ENCODE measurements at regions of chr7 and their contacts with region 1.

Region 1: DNA sequence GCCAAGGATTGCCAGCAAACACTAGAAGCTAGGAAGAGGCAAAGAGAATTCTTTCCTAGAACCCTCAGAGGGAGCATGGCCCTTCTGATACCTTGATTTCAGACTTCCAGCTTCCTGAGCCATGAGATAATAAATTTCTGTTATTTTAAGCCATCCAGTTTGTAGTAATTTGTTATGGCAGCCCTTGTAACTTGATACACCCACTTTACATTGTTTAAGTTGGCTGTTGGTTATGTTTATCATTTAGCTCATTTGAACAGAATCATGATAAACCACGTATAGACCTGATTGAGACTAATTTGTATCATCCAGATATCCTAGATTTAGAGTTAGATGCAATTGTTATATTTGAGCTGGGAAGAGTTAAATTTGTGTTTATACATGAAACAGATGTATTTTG is 9.4 kb upstream of the TES start:
- DNase-seq: no peak
- H3K4me3 ChIP-seq: no peak overlapping the region
- H3K27ac ChIP-seq: no peak overlapping the region
- H3K27me3 ChIP-seq: no peaks in the 10 kb centered on the region
- CTCF ChIP-seq: no peak

Region 2: DNA sequence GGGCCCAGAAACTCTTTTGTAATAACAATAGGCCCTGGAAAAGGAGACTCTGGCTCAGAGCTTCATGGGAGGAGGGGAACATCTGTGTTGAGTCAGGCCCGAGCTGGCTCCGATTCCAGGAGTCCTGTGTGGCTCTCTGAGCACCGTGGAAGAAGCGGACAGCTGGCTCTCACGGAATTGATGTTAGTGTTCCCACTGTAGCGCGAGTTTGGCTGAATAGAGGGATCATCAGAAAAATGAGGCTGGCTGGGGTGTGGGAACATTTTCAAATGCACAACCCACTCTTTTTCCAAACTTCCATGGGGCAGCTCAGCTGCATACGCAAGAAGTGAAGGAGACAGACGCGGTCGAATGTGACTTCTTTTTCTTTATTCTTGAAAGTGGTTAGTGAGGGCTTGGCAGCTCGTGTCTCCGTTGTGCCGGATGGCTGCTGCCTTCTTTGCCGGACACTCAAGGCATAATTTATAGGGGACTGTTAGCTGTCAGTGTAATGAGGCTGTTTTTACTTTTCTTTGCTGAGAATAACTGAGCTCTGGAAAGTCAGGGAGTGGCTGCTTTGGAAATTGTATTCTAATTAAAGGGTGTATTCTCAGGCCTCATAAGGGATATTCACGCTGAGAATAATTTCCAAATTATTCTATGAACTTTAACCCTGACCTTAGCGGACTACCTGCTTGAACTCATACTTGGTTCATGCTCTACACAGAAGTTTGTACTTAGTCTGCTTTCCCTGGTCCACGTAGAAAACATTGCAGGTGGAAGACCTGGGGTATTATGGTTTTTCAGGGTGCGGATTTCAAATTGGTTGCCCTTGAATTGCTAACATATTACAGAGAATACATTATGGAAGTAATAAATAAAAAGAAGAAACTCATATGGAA is 1256.0 kb before region 1 on chr7:
- CTCF ChIA-PET with region 1: no interaction called
- POLR2A ChIA-PET with region 1: no interaction called
- DNase-seq: peak; percentile 73
- H3K4me3 ChIP-seq: peak overlapping the region; percentile 49
- H3K27ac ChIP-seq: peak overlapping the region; percentile 79
- H3K27me3 ChIP-seq: no peaks in the 10 kb centered on the region
- CTCF ChIP-seq: no peak

Region 3: DNA sequence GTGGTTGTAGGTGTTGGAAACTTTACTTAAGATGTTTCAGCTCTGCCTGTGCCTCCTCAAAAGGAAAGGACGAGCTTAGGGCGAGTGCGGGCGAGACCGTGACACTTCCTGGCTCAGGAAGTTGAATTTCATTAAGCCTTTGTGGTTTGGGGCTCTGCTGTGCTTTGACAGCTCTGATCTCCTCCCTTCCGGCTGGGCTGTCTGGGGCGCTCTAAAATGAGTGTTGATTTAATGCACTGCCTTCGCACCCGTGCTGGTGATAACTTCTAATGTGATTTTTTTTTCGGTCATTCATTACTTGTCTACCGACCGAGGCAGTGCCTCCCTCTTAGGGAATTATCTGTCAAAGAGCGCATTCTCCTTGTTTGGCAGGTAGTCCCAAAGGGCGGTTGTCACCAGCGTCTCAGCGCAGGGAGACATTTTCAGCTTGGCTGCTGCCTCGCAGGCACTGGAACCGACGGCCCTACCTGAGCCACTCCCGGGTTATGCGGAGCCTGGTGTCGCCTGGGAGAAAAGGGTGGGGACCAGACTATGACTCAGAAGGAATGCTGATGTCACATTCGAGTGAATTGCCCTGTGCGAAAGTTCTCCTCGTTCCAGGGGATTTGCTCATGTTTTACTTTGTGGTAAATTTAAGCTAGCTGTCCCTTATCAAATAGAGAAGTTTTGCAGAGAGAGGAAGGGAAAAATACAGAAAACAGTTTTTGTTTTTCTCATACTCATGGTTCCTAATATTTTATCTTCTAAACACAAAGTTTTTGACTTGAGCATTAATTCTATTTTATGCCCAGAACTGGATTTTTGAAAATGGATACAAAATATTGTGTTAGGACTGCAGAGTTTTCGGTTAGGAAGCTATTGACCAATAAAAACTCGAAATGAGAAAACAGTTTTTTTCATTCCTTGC is 10.3 kb after region 1 on chr7:
- CTCF ChIA-PET with region 1: interaction called, 3 read pairs
- POLR2A ChIA-PET with region 1: interaction called, 10 read pairs
- DNase-seq: no peak
- H3K4me3 ChIP-seq: peak overlapping the region; percentile 80
- H3K27ac ChIP-seq: peak overlapping the region; percentile 75
- H3K27me3 ChIP-seq: no peaks in the 10 kb centered on the region
- CTCF ChIP-seq: no peak

Region 4: GRCh38 chr7:116290740-116291139 is 89.8 kb after region 1 on chr7:
- CTCF ChIA-PET with region 1: no interaction called
- POLR2A ChIA-PET with region 1: no interaction called
- DNase-seq: no peak
- H3K4me3 ChIP-seq: no peak overlapping the region
- H3K27ac ChIP-seq: no peak overlapping the region
- H3K27me3 ChIP-seq: no peaks in the 10 kb centered on the region
- CTCF ChIP-seq: no peak

Region 5: GRCh38 chr7:116340943-116341907 is 140.3 kb after region 1 on chr7:
- CTCF ChIA-PET with region 1: no interaction called
- POLR2A ChIA-PET with region 1: no interaction called
- DNase-seq: no peak
- H3K4me3 ChIP-seq: no peak overlapping the region
- H3K27ac ChIP-seq: no peak overlapping the region
- H3K27me3 ChIP-seq: no peaks in the 10 kb centered on the region
- CTCF ChIP-seq: peak; percentile 36